ENCODE measurements at regions of chr2 and their contacts with region 1.

Region 1: GRCh38 chr2:107529146-107529545 is 297.5 kb upstream of the RGPD4 start:
- DNase-seq: peak; percentile 6
- ATAC-seq: no peak
- H3K4me3 ChIP-seq: no peak overlapping the region
- H3K27ac ChIP-seq: no peak overlapping the region
- H3K4me1 ChIP-seq: peaks cover 10% of the 10 kb centered on the region; the same call in 1 of the 2 replicates
- H3K27me3 ChIP-seq: peaks cover 17% of the 10 kb centered on the region
- CTCF ChIP-seq: no peak

Region 2: DNA sequence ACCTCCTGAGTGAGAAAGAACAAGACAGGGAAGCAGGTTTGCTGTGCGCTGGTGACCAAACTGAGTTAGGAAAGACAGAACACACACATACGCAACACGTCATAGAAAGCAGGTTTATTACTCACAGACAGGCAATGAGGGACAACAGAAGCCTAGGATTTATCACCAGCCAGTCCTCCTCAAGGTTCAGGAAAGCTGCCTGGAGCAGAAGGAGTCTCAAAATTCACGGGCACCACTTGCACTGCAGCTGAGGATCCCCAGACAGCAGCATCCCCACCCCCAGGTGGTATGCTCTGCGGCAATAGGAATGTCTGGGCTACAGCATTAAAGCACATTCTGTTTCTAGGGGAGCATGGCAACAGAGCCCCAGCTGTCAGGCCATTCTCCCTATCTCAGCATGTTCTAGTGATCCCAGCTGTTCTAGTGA is 13.2 kb after region 1 on chr2:
- CTCF ChIA-PET with region 1: no interaction called
- POLR2A ChIA-PET with region 1: interaction called, 25 read pairs
- intact Hi-C with region 1: no loop called
- DNase-seq: no peak
- ATAC-seq: no peak
- H3K4me3 ChIP-seq: no peak overlapping the region
- H3K27ac ChIP-seq: no peak overlapping the region
- H3K4me1 ChIP-seq: no peaks in the 10 kb centered on the region
- H3K27me3 ChIP-seq: peaks cover 44% of the 10 kb centered on the region
- CTCF ChIP-seq: no peak

Region 3: GRCh38 chr2:107582487-107582886 is 53.3 kb after region 1 on chr2:
- CTCF ChIA-PET with region 1: no interaction called
- POLR2A ChIA-PET with region 1: no interaction called
- intact Hi-C with region 1: no loop called
- DNase-seq: peak; percentile 6
- ATAC-seq: no peak
- H3K4me3 ChIP-seq: no peak overlapping the region
- H3K27ac ChIP-seq: no peak overlapping the region
- H3K4me1 ChIP-seq: peaks cover 23% of the 10 kb centered on the region
- H3K27me3 ChIP-seq: peaks cover 15% of the 10 kb centered on the region; the same call in 1 of the 2 replicates
- CTCF ChIP-seq: no peak